IMR-90 (cell line): ENCODE measurements at regions of chr5 and their contacts with region 1.

Region 1: GRCh38 chr5:132639706-132640130 is 18.3 kb upstream of the IL13 start:
- DNase-seq: no peak
- ATAC-seq: no peak
- H3K4me3 ChIP-seq: no peak overlapping the region
- H3K27ac ChIP-seq: no peak overlapping the region
- H3K4me1 ChIP-seq: no peaks in the 10 kb centered on the region
- H3K27me3 ChIP-seq: no peaks in the 10 kb centered on the region
- CTCF ChIP-seq: no peak
- POLR2A ChIP-seq: no peak
- RAD21 ChIP-seq: no peak

Region 2: GRCh38 chr5:132591145-132591544 is 48.6 kb before region 1 on chr5:
- CTCF ChIA-PET with region 1: no interaction called
- POLR2A ChIA-PET with region 1: no interaction called
- dilution Hi-C with region 1: no loop called
- in situ Hi-C with region 1: no loop called
- intact Hi-C with region 1: loop called (anchors 5 kb)
- DNase-seq: peak; percentile 38
- ATAC-seq: no peak
- H3K4me3 ChIP-seq: no peak overlapping the region
- H3K27ac ChIP-seq: no peak overlapping the region
- H3K4me1 ChIP-seq: no peaks in the 10 kb centered on the region; the same call in 1 of the 2 replicates
- H3K27me3 ChIP-seq: no peaks in the 10 kb centered on the region
- CTCF ChIP-seq: peak; percentile 31; the same call in 1 of the 2 replicates
- POLR2A ChIP-seq: no peak
- RAD21 ChIP-seq: peak; percentile 51

Region 3: DNA sequence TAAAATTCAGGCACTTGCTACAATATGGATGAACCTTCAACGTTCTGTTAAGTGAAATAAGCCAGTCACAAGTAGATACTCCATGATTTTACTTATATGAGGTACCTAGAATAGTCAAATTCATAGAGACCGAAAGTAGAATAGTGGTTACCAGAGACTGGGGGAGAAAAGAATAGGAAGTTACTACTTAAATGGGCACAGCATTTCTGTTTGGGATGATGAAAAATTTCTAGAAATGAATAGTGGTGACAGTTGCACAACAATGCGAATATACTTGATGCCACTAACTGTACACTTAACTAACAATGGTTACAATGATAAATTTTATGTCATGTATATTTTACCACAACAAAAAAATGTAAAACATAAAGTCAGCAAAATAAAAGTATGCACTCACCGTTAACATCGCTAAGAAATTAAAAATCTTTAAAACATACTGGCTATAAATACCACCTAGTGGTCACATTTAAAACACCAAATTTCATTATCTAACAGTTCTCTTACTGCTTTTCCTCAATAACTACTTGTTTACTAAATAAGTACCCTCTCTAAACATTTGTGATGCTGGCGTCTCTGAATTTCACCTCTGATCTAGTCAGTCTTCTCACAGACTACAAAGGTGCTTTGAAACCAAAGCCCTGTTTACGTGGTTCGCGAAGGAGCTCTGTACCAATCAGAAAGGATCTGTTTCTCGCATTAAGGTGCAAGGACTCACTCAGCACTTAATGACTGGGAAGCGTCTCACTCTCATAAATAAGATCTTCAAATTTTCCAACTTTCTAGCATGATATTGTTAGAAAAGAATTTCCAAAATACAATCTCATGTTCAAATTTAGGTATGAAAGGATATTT is 75.0 kb after region 1 on chr5:
- CTCF ChIA-PET with region 1: no interaction called
- POLR2A ChIA-PET with region 1: no interaction called
- dilution Hi-C with region 1: no loop called
- in situ Hi-C with region 1: no loop called
- intact Hi-C with region 1: loop called (anchors 5 kb)
- DNase-seq: peak; percentile 15
- ATAC-seq: peak; percentile 60; the same call in 1 of the 2 replicates
- H3K4me3 ChIP-seq: no peak overlapping the region
- H3K27ac ChIP-seq: no peak overlapping the region
- H3K4me1 ChIP-seq: no peaks in the 10 kb centered on the region
- H3K27me3 ChIP-seq: no peaks in the 10 kb centered on the region
- CTCF ChIP-seq: peak; percentile 48
- POLR2A ChIP-seq: no peak
- RAD21 ChIP-seq: peak; percentile 43